A673 (cell line): ENCODE measurements at regions of chr21 and their contacts with region 1.

Region 1: DNA sequence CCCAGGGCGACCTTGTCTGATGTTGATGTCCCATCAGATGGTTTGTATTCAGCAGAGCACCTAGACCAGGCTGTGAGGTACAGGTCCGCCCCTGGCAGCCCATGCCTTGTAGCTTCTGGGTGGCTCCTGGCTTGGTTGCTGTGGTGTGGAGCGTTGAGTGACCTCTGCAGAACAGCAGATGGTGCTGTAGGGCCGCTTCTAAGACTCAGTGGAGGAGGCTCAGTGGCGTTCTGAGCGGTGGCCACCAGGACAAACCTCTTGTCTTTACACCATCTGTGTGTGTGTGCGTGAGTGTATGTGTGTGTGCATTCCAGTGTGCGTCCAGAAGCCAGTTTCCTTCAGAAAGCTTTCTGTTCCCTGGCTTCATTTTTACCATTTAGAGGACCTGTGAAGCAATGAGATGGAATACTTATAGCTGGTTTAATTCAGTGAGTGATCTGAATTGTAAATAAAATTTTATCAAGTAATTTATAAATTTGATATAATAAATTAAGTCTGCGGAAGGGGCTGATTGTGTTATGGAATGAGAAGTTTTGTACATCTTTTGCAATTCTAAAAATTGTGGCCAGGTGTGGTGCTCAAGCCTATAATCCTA is 66.1 kb downstream of the ADARB1 start:
- DNase-seq: peak; percentile 92
- H3K4me3 ChIP-seq: no peak overlapping the region
- H3K27ac ChIP-seq: no peak overlapping the region
- H3K4me1 ChIP-seq: peaks cover 16% of the 10 kb centered on the region
- H3K27me3 ChIP-seq: no peaks in the 10 kb centered on the region
- CTCF ChIP-seq: peak; percentile 93

Region 2: GRCh38 chr21:44949779-44950198 is 190.7 kb before region 1 on chr21:
- CTCF ChIA-PET with region 1: interaction called, 8 read pairs
- POLR2A ChIA-PET with region 1: no interaction called
- intact Hi-C with region 1: loop called (anchors 5 kb)
- DNase-seq: no peak
- H3K4me3 ChIP-seq: no peak overlapping the region
- H3K27ac ChIP-seq: no peak overlapping the region
- H3K4me1 ChIP-seq: peaks cover 13% of the 10 kb centered on the region
- H3K27me3 ChIP-seq: no peaks in the 10 kb centered on the region
- CTCF ChIP-seq: peak; percentile 81

Region 3: GRCh38 chr21:45241357-45241756 is 100.9 kb after region 1 on chr21:
- CTCF ChIA-PET with region 1: interaction called, 16 read pairs
- POLR2A ChIA-PET with region 1: no interaction called
- intact Hi-C with region 1: no loop called
- DNase-seq: no peak
- H3K4me3 ChIP-seq: no peak overlapping the region
- H3K27ac ChIP-seq: no peak overlapping the region
- H3K4me1 ChIP-seq: no peaks in the 10 kb centered on the region
- H3K27me3 ChIP-seq: no peaks in the 10 kb centered on the region
- CTCF ChIP-seq: no peak

Region 4: GRCh38 chr21:45439161-45439872 is 298.9 kb after region 1 on chr21:
- CTCF ChIA-PET with region 1: no interaction called
- POLR2A ChIA-PET with region 1: no interaction called
- intact Hi-C with region 1: loop called (anchors 1 kb)
- DNase-seq: peak; percentile 85
- H3K4me3 ChIP-seq: peak overlapping the region; percentile 40
- H3K27ac ChIP-seq: no peak overlapping the region
- H3K4me1 ChIP-seq: peaks cover 6% of the 10 kb centered on the region
- H3K27me3 ChIP-seq: no peaks in the 10 kb centered on the region
- CTCF ChIP-seq: peak; percentile 94